Posterior cingulate gyrus (tissue), 11 donors: ENCODE measurements at regions of chr3 and their contacts with region 1.

Region 1: DNA sequence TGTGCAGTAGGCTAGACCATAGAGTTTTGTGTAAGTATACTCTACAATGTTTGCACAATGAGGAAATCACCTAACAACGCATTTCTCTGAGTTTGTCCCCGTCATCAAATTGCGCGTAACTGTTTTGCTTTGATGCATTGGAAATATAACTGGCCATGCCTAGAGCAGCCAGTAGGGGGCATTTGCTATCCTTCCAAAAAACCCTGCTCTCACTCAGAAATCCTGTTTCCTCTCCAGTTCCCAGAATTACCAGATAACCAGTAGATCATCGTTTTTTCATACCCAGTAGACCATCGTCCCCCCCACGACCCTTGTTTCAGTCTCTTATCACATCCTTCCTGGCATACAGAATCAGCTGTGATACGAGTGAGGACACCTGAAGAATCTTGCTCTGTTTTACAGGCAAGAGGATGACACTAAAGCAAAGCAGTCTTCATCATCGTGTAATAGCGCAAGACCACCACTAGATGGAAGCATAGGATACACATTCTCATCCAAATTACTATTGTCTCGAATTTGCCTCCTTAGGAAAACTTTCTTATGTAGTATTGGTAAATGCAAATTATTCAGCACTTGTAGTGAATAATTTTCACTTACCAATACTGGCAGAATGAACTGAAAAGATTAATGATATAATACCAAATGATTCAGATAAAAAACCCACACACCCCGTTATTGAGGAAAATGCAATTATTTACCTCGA is 4.4 kb upstream of the GABRR3 start:
- DNase-seq: peak in 7 of 10 donors; percentile 28 to 86 (median 60)

Region 2: DNA sequence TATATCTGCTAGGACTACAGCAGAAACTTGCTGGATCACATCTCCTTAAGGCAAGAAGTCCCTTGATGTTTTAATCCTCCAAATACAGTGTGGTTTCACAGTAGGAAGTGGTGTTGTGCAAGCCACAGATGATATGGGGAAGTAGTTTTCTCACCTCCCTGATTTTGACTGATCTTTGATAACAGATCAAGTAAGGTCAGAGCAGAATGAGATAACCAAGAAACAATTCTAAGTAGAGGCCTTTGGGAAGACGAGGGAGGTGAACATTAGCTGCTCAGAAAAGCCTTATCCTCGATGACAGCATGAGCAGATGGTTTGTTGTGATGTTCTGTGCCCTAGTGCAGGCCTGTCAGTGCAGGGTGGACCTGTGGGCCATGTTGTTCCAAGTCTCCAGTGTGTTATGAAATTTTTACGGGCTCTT is 128.5 kb before region 1 on chr3:
- intact Hi-C with region 1: no loop called
- DNase-seq: no peak

Region 3: GRCh38 chr3:98329392-98330124 is 290.1 kb after region 1 on chr3:
- intact Hi-C with region 1: loop called (anchors 1 kb)
- DNase-seq: peak in 6 of 10 donors; percentile 38 to 86 (median 56)

Region 4: DNA sequence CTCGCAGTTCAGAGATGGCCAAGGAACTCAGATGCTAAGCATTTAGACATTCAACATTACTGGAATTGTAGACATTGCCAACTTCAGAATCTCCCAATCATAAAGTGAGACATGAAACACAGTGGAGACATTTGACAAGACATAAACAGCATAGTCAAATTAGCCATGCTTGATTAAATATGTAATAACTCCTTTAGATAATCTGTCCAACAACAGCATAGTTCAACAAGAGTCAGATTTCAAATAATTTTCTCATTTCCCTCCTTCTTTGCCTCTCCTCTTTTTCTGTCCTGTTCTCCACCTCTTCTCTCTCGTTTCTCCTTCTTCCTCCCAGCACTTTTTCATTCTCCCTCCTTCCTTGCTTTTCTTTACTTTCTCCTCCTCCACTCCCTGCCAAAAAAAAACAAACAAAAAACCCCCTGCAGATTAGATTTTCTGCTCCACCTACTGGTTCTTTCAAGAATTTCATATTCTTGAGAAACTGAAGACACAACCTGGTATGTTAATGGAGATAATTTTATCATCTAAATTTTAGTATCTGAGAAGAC is 533.8 kb after region 1 on chr3:
- intact Hi-C with region 1: loop called (anchors 5 kb)
- DNase-seq: no peak

Region 5: GRCh38 chr3:98593046-98593936 is 553.8 kb after region 1 on chr3 and contains the start of gene CPOX:
- intact Hi-C with region 1: loop called (anchors 5 kb)
- DNase-seq: peak; percentile 85 to 98 (median 90)

Region 6: GRCh38 chr3:98798820-98799219 is 759.3 kb after region 1 on chr3:
- intact Hi-C with region 1: loop called (anchors 10 kb)
- DNase-seq: no peak